Caco-2 (cell line): ENCODE measurements at regions of chr9 and their contacts with region 1.

Region 1: DNA sequence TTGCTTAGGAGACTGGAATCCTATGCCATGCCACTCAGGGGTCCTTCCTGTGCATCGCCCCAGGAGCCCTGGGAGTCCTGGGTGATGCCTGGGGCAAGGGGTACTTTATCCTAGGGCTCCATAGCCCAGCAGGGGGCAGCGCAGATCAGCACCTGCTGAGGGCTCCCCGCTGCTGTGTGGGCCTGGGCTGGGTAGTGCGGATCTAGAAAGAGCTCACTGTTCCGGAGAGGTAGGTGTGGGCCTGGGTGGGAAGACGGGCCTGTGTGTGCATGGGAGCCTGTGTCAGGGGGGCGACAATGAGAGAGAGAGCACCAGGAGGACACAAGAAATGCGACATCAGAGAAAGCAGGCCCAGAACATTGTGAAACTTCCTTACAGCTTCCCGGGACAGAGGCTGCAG is 11.4 kb upstream of the DAB2IP start:
- DNase-seq: peak; percentile 58 to 76
- H3K4me3 ChIP-seq: no peak overlapping the region
- H3K4me3 Mint-ChIP-seq: no peak overlapping the region
- H3K27ac Mint-ChIP-seq: no peak overlapping the region
- H3K4me1 ChIP-seq: 0 out of 2 replicates have a peak, but pooled peaks cover 1% of the 10 kb centered on the region
- H3K4me1 Mint-ChIP-seq: peaks cover 11% of the 10 kb centered on the region
- H3K27me3 ChIP-seq: no peaks in the 10 kb centered on the region
- H3K27me3 Mint-ChIP-seq: no peaks in the 10 kb centered on the region
- CTCF ChIP-seq: peak; percentile 64 to 65

Region 2: GRCh38 chr9:121213136-121213806 is 426.8 kb before region 1 on chr9:
- CTCF ChIA-PET with region 1: no interaction called
- POLR2A ChIA-PET with region 1: no interaction called
- intact Hi-C with region 1: no loop called
- DNase-seq: peak; percentile 87 to 90
- H3K4me3 ChIP-seq: no peak overlapping the region
- H3K4me3 Mint-ChIP-seq: no peak overlapping the region
- H3K27ac Mint-ChIP-seq: no peak overlapping the region
- H3K4me1 ChIP-seq: no peaks in the 10 kb centered on the region
- H3K4me1 Mint-ChIP-seq: no peaks in the 10 kb centered on the region
- H3K27me3 ChIP-seq: no peaks in the 10 kb centered on the region
- H3K27me3 Mint-ChIP-seq: no peaks in the 10 kb centered on the region
- CTCF ChIP-seq: peak; percentile 88 to 95

Region 3: GRCh38 chr9:121650217-121651007 is 10.3 kb after region 1 on chr9:
- CTCF ChIA-PET with region 1: interaction called, 15 read pairs
- POLR2A ChIA-PET with region 1: no interaction called
- intact Hi-C with region 1: no loop called
- DNase-seq: peak; percentile 94 to 95
- H3K4me3 ChIP-seq: peak overlapping the region; percentile 69
- H3K4me3 Mint-ChIP-seq: peak overlapping the region; percentile 73
- H3K27ac Mint-ChIP-seq: peak overlapping the region; percentile 18
- H3K4me1 ChIP-seq: peaks cover 22% of the 10 kb centered on the region
- H3K4me1 Mint-ChIP-seq: peaks cover 18% of the 10 kb centered on the region
- H3K27me3 ChIP-seq: no peaks in the 10 kb centered on the region
- H3K27me3 Mint-ChIP-seq: no peaks in the 10 kb centered on the region
- CTCF ChIP-seq: no peak

Region 4: GRCh38 chr9:121692606-121693387 is 52.7 kb after region 1 on chr9:
- CTCF ChIA-PET with region 1: interaction called, 17 read pairs
- POLR2A ChIA-PET with region 1: no interaction called
- intact Hi-C with region 1: loop called (anchors 2 kb)
- DNase-seq: peak; percentile 72 to 76
- H3K4me3 ChIP-seq: no peak overlapping the region
- H3K4me3 Mint-ChIP-seq: no peak overlapping the region
- H3K27ac Mint-ChIP-seq: peak overlapping the region; percentile 82
- H3K4me1 ChIP-seq: peaks cover 18% of the 10 kb centered on the region
- H3K4me1 Mint-ChIP-seq: peaks cover 22% of the 10 kb centered on the region
- H3K27me3 ChIP-seq: no peaks in the 10 kb centered on the region
- H3K27me3 Mint-ChIP-seq: no peaks in the 10 kb centered on the region
- CTCF ChIP-seq: no peak

Region 5: DNA sequence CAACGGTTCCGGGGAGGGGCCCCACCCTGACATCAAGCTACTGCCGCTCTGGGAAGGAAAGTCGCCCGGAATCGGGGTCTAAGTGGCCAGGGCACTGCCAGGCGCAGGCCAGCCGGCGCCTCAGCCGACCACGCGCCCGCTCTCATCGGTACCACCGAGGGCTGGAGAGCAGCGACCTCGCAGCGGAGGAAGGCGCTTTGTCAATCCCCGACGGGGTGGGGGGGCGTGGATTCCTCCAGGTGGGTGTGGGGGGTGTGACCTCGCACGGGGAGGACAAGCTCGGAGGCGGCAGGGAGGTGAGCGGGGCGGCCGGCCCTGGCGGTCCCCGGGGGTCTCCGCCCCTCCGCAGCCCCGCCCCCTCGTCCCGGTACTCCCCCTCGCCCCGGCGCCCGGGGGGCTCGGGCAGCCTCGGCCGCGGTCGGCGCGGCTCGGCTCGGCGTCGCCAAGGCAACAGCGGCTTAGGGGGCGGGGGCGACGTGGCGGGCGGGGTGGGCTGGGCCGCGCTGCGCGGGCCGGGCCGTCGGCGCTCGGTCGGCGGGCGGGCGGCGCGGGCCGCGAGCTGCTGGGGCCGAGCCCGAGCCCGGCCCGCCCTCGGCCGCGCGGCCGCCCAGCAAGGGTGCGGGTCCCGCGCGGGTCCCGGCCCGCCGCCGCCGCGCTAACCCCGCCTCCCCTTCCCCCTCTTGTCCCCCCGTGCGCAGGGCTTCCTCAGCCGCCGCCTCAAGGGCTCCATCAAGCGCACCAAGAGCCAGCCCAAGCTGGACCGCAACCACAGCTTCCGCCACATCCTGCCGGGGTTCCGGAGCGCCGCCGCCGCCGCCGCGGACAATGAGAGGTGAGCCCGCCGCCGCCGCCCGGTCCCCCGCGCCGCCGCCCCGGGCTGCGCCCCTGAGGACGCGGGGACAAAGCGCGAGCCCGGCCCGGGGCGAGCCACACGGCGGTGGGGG is 58.8 kb after region 1 on chr9:
- CTCF ChIA-PET with region 1: interaction called, 17 read pairs
- POLR2A ChIA-PET with region 1: no interaction called
- intact Hi-C with region 1: loop called (anchors 2 kb)
- DNase-seq: peak in 1 of 2 experiments; percentile 42
- H3K4me3 ChIP-seq: peak overlapping the region; percentile 50
- H3K4me3 Mint-ChIP-seq: peak overlapping the region; percentile 65
- H3K27ac Mint-ChIP-seq: no peak overlapping the region
- H3K4me1 ChIP-seq: peaks cover 9% of the 10 kb centered on the region; the same call in 1 of the 2 replicates
- H3K4me1 Mint-ChIP-seq: no peaks in the 10 kb centered on the region
- H3K27me3 ChIP-seq: no peaks in the 10 kb centered on the region
- H3K27me3 Mint-ChIP-seq: no peaks in the 10 kb centered on the region
- CTCF ChIP-seq: no peak

Region 6: DNA sequence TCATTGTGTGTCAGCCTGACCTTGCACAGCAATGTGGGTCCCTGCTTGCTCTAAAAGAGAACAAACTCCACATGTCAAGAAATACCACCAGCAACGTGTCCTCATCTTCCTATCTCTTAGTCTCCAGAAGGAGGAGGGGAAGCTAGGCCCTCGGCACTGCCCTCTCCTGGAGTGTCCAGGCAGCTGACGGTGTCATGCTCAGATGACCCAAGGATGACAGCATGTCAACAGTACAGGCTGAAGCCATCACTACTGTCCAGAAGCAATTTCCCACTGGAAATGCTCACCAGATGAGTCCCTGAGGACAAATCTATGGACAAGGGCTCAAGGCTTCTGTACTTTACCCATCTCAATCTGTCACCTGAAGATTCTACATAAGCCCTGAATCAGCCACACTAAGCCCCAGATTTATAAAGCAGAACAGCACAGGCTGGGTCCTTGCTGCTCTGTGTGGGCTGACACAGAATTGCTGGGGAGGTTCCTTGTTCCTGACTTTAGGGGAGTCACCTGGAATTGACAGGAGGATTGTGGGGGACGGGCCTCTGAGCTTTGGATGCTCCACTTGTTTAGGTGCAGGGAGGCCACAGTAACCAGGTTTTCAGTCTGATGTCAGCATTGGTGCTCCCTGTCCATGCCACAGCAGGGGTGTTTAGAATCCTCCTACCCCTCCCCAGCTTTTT is 221.6 kb after region 1 on chr9:
- CTCF ChIA-PET with region 1: interaction called, 10 read pairs
- POLR2A ChIA-PET with region 1: no interaction called
- intact Hi-C with region 1: loop called (anchors 1 kb)
- DNase-seq: peak; percentile 68 to 69
- H3K4me3 ChIP-seq: no peak overlapping the region
- H3K4me3 Mint-ChIP-seq: no peak overlapping the region
- H3K27ac Mint-ChIP-seq: no peak overlapping the region
- H3K4me1 ChIP-seq: no peaks in the 10 kb centered on the region
- H3K4me1 Mint-ChIP-seq: no peaks in the 10 kb centered on the region
- H3K27me3 ChIP-seq: no peaks in the 10 kb centered on the region
- H3K27me3 Mint-ChIP-seq: peaks cover 14% of the 10 kb centered on the region
- CTCF ChIP-seq: peak; percentile 58 to 89

Region 7: GRCh38 chr9:121992571-121993212 is 352.6 kb after region 1 on chr9:
- CTCF ChIA-PET with region 1: no interaction called
- POLR2A ChIA-PET with region 1: no interaction called
- intact Hi-C with region 1: loop called (anchors 1 kb)
- DNase-seq: peak; percentile 43 to 55
- H3K4me3 ChIP-seq: no peak overlapping the region
- H3K4me3 Mint-ChIP-seq: no peak overlapping the region
- H3K27ac Mint-ChIP-seq: no peak overlapping the region
- H3K4me1 ChIP-seq: no peaks in the 10 kb centered on the region
- H3K4me1 Mint-ChIP-seq: no peaks in the 10 kb centered on the region
- H3K27me3 ChIP-seq: no peaks in the 10 kb centered on the region
- H3K27me3 Mint-ChIP-seq: no peaks in the 10 kb centered on the region
- CTCF ChIP-seq: peak; percentile 75